Activated T-helper 1 cell treated with anti-CD3 and anti-CD28 coated beads, Interleukin-12 subunit alpha, Interleukin-12 subunit beta, Interleukin-2, Interleukin-4 antibody, amounts not matched to agents 30 ng/mL and 10 ng/mL and 1 ng/mL, durations not matched to agents 14 hours and 24 hours and 36 hours (primary cell): ENCODE measurements at regions of chr7 and their contacts with region 1.

Region 1: GRCh38 chr7:2555121-2556052 is at the start of gene BRAT1:
- DNase-seq: peak; percentile 87
- H3K4me3 Mint-ChIP-seq: peak within 1 kb of the TSS; percentile 91
- H3K27ac Mint-ChIP-seq: peak within 1 kb of the TSS; percentile 86
- H3K4me1 Mint-ChIP-seq: peaks cover 25% of the 10 kb centered on the region
- H3K27me3 Mint-ChIP-seq: no peaks in the 10 kb centered on the region
- total RNA-seq, gene BRAT1: 39.2 and 42.9 TPM in 2 replicates

Region 2: GRCh38 chr7:1569833-1570633 is 985.4 kb before region 1 on chr7 and contains the start of gene PSMG3:
- intact Hi-C with region 1: loop called (anchors 10 kb)
- DNase-seq: peak; percentile 86
- H3K4me3 Mint-ChIP-seq: peak within 1 kb of the TSS; percentile 89
- H3K27ac Mint-ChIP-seq: peak within 1 kb of the TSS; percentile 81
- H3K4me1 Mint-ChIP-seq: peaks cover 31% of the 10 kb centered on the region
- H3K27me3 Mint-ChIP-seq: no peaks in the 10 kb centered on the region
- total RNA-seq, gene PSMG3: 55.7 and 56.0 TPM in 2 replicates

Region 3: DNA sequence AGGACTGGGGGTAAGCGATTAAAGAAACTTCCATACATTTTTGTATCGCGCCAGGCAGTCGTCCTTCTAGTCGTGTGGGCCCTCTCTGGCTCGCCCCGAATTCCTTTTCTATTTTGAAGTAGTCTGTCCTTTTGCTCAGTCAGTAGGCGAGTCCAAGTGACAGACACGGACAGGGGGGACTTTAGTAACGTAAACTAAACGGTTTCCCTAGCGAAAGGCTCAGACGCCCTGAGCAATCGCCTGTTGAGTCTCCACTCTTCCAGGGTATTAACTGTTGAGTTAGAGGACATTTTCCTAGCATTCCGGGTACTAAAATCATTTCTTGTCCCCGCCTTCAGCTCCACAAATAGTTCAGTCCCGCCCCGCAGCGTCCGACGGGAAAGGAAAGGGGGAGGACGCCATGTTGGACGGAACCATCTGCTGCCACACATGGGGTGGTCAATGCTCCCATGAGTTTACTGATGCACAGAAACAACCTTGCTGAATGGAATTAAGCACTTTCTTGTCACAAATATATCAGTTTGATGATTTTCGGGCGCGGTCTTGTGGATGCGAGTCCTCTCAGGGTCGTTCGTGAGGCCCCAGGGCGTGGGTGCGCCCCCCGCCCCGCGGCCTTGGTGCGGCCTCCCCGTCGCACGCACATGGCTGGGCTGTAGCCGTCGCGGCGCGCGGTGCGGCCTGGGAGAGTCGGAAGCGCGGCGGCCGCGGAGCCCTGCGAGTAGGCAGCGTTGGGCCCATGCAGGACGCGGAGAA is 201.0 kb before region 1 on chr7 and contains the start of gene EIF3B:
- intact Hi-C with region 1: loop called (anchors 1 kb)
- DNase-seq: peak; percentile 85
- H3K4me3 Mint-ChIP-seq: peak within 1 kb of the TSS; percentile 92
- H3K27ac Mint-ChIP-seq: peak within 1 kb of the TSS; percentile 100
- H3K4me1 Mint-ChIP-seq: peaks cover 21% of the 10 kb centered on the region
- H3K27me3 Mint-ChIP-seq: no peaks in the 10 kb centered on the region
- total RNA-seq, gene EIF3B: 269 and 270 TPM in 2 replicates

Region 4: DNA sequence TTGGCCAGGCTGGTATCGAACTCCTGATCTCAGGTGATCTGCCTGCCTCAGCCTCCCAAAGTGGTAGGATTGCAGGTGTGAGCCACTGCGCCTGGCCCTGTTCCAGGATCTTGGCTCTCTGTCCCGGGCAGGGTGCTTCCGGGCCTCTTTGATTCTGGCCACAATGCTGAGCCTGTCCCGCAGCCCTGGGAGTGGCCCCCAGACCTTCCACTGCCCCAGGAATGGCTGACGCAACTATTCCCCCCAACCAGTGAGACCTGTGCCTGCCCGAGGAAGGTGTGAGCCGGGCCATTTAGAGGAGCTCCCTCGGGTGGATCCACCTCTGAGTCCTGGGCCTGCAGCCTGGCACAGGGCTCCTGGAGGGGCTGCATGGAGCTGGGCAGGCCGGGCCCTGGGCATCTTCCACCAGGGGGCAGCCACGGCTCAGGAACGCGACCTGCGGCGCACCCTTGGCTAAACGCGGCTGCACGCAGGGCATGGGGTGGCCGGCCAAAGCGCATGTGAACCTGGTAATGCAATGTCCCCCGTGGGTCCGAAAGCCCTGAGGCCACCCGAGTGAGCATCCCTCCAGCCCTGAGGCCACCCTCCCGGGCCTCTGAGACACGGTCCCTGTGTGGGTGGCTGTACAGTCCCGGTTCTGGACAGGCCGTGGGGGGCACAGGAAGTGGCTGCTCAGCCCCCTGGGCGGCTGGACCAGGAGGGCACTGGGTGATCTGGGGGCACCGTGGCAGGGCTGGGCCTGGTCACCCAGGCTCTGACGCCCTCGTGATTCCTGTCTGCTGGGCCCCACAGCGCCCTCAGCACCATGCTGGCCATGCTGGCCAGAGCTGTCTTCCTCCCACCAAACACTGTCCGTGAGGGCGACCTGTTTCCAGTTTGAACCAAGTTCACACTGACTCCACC is 104.0 kb before region 1 on chr7:
- intact Hi-C with region 1: loop called (anchors 5 kb)
- DNase-seq: peak; percentile 54
- H3K4me3 Mint-ChIP-seq: no peak overlapping the region
- H3K27ac Mint-ChIP-seq: no peak overlapping the region
- H3K4me1 Mint-ChIP-seq: no peaks in the 10 kb centered on the region
- H3K27me3 Mint-ChIP-seq: peaks cover 12% of the 10 kb centered on the region

Region 5: GRCh38 chr7:2508327-2509215 is 46.8 kb before region 1 on chr7:
- intact Hi-C with region 1: loop called (anchors 1 kb)
- DNase-seq: peak; percentile 63
- H3K4me3 Mint-ChIP-seq: peak overlapping the region; percentile 71
- H3K27ac Mint-ChIP-seq: peak overlapping the region; percentile 74
- H3K4me1 Mint-ChIP-seq: peaks cover 42% of the 10 kb centered on the region
- H3K27me3 Mint-ChIP-seq: peaks cover 5% of the 10 kb centered on the region

Region 6: GRCh38 chr7:2529161-2530070 is 26.0 kb before region 1 on chr7:
- intact Hi-C with region 1: loop called (anchors 1 kb)
- DNase-seq: peak; percentile 60
- H3K4me3 Mint-ChIP-seq: peak overlapping the region; percentile 74
- H3K27ac Mint-ChIP-seq: peak overlapping the region; percentile 97
- H3K4me1 Mint-ChIP-seq: peaks cover 34% of the 10 kb centered on the region
- H3K27me3 Mint-ChIP-seq: no peaks in the 10 kb centered on the region

Region 7: DNA sequence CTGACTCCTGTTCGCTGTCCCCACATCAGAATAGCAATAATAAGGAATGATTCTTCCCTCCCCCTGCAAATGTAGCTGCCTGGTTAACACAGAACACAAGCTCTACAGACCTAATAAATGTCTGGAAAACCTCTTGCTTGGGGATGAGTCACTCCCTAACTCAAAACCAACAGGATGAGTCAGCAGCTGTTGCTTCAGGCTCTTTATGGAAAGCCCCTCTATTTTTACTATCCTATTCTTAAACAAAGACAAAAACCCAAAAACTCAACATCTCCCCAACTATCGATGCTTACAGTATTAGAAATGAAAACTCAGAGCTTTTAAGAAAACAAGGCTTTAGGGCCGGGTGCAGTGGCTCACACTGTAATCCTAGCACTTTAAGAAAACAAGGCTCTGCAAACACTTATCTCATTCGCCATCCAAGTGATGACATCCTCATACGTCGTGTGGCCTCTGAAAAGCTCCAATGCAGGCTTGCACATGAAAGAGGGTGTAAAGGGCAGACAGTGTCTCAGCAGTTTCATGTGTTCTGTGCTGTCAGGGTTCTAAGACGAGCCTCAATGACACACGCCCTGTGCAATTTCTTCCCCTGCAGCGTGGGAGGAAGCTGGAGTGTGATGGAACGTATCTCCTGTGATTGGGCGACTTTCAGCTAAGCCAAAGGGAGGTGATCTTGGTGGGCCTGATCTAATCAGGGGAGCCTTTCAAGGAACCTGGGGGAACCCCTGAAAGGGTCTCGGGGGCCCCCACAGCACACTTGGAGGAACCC is 202.7 kb after region 1 on chr7:
- intact Hi-C with region 1: loop called (anchors 1 kb)
- DNase-seq: peak; percentile 72
- H3K4me3 Mint-ChIP-seq: peak overlapping the region; percentile 59
- H3K27ac Mint-ChIP-seq: peak overlapping the region; percentile 95
- H3K4me1 Mint-ChIP-seq: peaks cover 63% of the 10 kb centered on the region
- H3K27me3 Mint-ChIP-seq: no peaks in the 10 kb centered on the region